Prostate gland (tissue), 2 donors: ENCODE measurements at regions of chr11 and their contacts with region 1.

Region 1: GRCh38 chr11:118565051-118565450 is 680 bp downstream of the IFT46 start:
- DNase-seq: peak; percentile 11
- H3K4me3 ChIP-seq: peak overlapping the region; percentile 35 to 44
- H3K27ac ChIP-seq: peak overlapping the region; percentile 68 to 72
- H3K4me1 ChIP-seq: peaks cover 10% of the 10 kb centered on the region
- H3K27me3 ChIP-seq: no peaks in the 10 kb centered on the region
- CTCF ChIP-seq: no peak
- POLR2A ChIP-seq: no peak

Region 2: GRCh38 chr11:118530408-118531339 is 34.4 kb before region 1 on chr11 and contains the start of gene TMEM25:
- intact Hi-C with region 1: loop called (anchors 5 kb)
- DNase-seq: peak; percentile 69
- H3K4me3 ChIP-seq: peak within 1 kb of the TSS; percentile 62 to 84
- H3K27ac ChIP-seq: peak within 1 kb of the TSS; percentile 70 to 81
- H3K4me1 ChIP-seq: peaks cover 10% of the 10 kb centered on the region
- H3K27me3 ChIP-seq: no peaks in the 10 kb centered on the region
- CTCF ChIP-seq: no peak
- POLR2A ChIP-seq: no peak
- total RNA-seq, gene TMEM25: 52.4 to 64.2 TPM